Uterus (tissue), 4 donors: ENCODE measurements at regions of chr17 and their contacts with region 1.

Region 1: DNA sequence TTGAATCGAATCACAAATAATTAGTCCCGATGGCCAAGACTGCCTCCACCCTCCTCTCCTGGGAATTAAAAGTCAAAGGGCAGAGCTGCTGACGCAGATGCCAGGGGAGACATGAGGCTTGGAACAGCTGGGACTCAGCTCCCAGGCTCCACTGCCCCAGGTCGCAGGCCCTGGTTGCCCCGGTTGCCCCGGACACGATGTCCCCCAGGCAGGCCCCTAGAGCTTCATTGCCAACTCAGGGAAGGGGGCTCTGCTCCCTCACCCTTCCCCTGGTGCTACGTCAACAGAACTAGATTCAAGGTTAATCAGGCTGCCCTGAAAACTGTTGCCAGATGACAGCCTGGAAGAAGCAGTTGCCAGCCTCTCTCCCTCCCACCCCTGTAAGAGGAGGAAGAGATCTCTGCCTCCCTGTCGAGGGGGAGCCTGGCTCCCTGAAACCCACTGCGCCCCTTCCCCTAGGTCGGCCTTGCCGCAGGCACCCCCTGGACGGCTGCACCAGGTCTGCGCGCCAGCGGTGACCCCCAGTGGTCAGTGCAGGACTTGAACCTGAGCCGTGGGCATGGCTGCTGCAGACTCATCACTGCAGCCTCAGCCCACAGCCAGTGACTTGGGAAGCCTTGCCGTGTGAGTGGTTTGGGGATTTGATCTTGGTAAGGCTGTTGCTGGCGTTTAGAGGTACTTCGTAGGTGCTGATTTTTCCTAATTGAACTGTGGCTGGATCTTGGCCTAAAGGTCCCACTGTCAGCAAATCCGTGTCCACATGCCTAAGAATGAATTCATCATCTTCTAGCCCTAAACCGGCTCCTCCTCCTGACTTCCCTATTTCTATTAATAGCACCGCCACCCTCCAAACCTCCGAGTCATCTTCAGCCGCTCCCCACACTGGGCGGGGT is 84.1 kb upstream of the TOB1 start:
- DNase-seq: peak; percentile 88 to 90
- H3K4me3 ChIP-seq: no peak overlapping the region
- H3K27ac ChIP-seq: peak overlapping the region; percentile 86 to 96
- H3K4me1 ChIP-seq: peaks cover 3 to 26% of the 10 kb centered on the region in 2 donors
- H3K27me3 ChIP-seq: no peaks in the 10 kb centered on the region
- CTCF ChIP-seq: peak; percentile 69 to 91 (median 81)
- POLR2A ChIP-seq: no peak

Region 2: GRCh38 chr17:50853015-50853615 is 97.1 kb before region 1 on chr17:
- intact Hi-C with region 1: loop called (anchors 5 kb)
- DNase-seq: no peak
- H3K4me3 ChIP-seq: no peak overlapping the region
- H3K27ac ChIP-seq: peak overlapping the region in 1 of 2 donors; percentile 83
- H3K4me1 ChIP-seq: no peaks in the 10 kb centered on the region
- H3K27me3 ChIP-seq: no peaks in the 10 kb centered on the region
- CTCF ChIP-seq: no peak
- POLR2A ChIP-seq: no peak

Region 3: GRCh38 chr17:50865984-50866774 is 84.1 kb before region 1 on chr17 and contains the start of gene TOB1:
- intact Hi-C with region 1: loop called (anchors 5 kb)
- DNase-seq: peak; percentile 97 to 98
- H3K4me3 ChIP-seq: peak within 1 kb of the TSS; percentile 91 to 99
- H3K27ac ChIP-seq: peak within 1 kb of the TSS; percentile 99
- H3K4me1 ChIP-seq: peaks cover 0 to 5% of the 10 kb centered on the region in 2 donors
- H3K27me3 ChIP-seq: no peaks in the 10 kb centered on the region
- CTCF ChIP-seq: peak in 2 of 4 experiments; percentile 4 to 7
- POLR2A ChIP-seq: peak; percentile 99 to 100
- total RNA-seq, gene TOB1: 16.5 to 64.3 (median 27.5) TPM